T-cell (primary cell): ENCODE measurements at regions of chr1 and their contacts with region 1.

Region 1: DNA sequence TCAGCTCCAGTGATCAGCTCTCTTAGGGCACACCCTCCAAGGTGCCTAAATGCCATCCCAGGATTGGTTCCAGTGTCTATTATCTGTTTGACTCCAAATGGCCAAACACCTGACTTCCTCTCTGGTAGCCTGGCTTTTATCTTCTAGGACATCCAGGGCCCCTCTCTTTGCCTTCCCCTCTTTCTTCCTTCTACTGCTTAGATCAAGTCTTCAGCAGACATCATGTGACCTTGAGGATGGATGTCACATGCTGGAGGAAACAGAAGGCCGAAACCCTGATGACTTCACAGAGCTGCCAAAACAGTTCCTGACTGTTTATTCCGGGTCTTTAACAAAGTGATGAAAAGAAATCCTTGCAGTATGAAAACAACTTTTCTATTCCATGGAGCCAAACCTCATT is 24.4 kb upstream of the WDR26 start:
- DNase-seq: no peak
- ATAC-seq: no peak
- H3K4me3 ChIP-seq: no peak overlapping the region
- H3K4me3 Mint-ChIP-seq: no peak overlapping the region
- H3K27ac ChIP-seq: no peak overlapping the region
- H3K27ac Mint-ChIP-seq: peak overlapping the region in 1 of 2 donors; percentile 59
- H3K4me1 ChIP-seq: peaks cover 0 to 9% of the 10 kb centered on the region in 2 experiments
- H3K4me1 Mint-ChIP-seq: peaks cover 10 to 12% (median 11%) of the 10 kb centered on the region in 3 donors
- H3K27me3 ChIP-seq: no peaks in the 10 kb centered on the region
- H3K27me3 Mint-ChIP-seq: no peaks in the 10 kb centered on the region

Region 2: DNA sequence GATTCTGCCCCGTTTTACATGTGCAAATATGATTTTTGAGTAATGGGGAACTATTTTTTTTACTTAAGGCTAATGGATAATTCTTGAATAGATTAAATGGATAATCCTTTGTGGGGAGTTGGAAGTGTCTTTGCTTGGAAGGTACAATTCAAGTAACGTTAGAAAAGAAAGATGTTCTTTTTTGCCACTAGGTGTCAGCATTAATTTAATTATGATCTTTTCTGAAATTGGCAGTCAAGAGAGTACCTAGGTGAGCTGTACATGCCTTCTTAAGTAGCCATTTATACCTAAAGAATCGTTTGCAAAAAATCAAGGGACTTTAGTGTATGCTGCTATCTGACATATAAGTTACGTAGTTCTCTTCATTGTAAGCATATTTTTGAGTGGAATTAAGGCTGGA is 342.9 kb before region 1 on chr1:
- CTCF ChIA-PET with region 1: interaction called, 24 to 34 read pairs
- POLR2A ChIA-PET with region 1: interaction called in 1 of 2 experiments, 3 read pairs
- DNase-seq: peak in 2 of 35 experiments; percentile 1 to 68
- ATAC-seq: peak; percentile 18 to 26 (median 25)
- H3K4me3 ChIP-seq: no peak overlapping the region
- H3K4me3 Mint-ChIP-seq: peak overlapping the region; percentile 45 to 68 (median 53)
- H3K27ac ChIP-seq: no peak overlapping the region
- H3K27ac Mint-ChIP-seq: peak overlapping the region; percentile 73 to 91
- H3K4me1 ChIP-seq: peaks cover 14 to 17% of the 10 kb centered on the region in 2 experiments
- H3K4me1 Mint-ChIP-seq: peaks cover 40 to 50% (median 41%) of the 10 kb centered on the region in 3 donors
- H3K27me3 ChIP-seq: no peaks in the 10 kb centered on the region
- H3K27me3 Mint-ChIP-seq: peaks cover 2 to 4% of the 10 kb centered on the region in 2 donors

Region 3: DNA sequence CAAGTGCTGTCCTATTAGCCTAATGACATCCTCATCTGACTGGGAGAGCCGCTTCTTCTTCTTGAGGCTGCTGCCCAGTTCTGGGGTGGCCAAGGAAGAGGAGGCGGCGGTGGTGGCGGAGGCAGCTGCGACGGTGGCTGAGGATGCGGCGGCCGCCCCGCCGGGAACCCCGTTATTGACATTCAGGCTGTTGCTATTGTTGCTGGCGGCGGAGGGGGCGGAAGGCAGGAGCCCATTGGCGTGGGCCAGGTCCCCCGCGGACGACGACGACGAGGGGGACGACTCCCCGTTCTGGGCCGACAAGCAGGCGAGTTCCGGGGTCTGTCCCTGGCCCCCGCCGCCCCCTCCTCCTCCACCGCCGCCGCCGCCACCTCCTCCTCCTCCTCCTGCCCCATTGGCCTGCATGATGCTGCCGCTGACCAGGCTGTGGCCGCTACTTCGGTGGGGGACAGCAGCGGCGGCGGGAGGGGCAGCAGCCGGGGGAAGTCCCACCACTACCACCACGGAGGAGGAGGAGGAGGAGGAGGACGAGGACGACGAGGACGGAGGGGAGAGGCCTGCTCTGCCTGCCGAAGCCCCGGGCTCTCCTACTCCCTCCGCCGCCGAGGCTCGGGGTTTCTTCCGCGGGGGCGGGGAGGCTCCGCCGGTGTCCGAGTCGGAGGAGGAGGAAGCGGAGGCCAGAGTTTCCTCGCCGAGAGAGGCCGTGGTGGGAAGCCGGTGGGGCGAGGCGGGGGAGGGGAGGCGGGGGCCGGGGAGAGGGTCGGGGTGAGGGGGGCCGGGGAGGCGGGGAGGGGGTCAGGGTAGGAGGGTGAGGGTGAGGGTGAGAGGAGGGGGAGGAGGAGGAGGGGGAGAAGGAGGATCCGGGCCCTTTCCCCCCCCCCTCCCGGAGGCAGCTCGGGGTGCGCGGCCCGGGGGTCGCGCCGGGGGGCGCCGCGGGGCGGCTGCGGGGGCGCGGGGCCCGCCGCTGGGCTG is 25.0 kb before region 1 on chr1:
- CTCF ChIA-PET with region 1: interaction called, 13 to 14 read pairs
- POLR2A ChIA-PET with region 1: interaction called in 1 of 2 experiments, 5 read pairs
- DNase-seq: peak; percentile 13 to 66 (median 47)
- ATAC-seq: peak; percentile 18 to 38 (median 22)
- H3K4me3 ChIP-seq: peak overlapping the region; percentile 79 to 93
- H3K4me3 Mint-ChIP-seq: peak overlapping the region; percentile 85 to 91 (median 89)
- H3K27ac ChIP-seq: peak overlapping the region; percentile 92
- H3K27ac Mint-ChIP-seq: peak overlapping the region; percentile 86 to 91
- H3K4me1 ChIP-seq: peaks cover 18 to 44% of the 10 kb centered on the region in 2 experiments
- H3K4me1 Mint-ChIP-seq: peaks cover 61 to 67% (median 65%) of the 10 kb centered on the region in 3 donors
- H3K27me3 ChIP-seq: no peaks in the 10 kb centered on the region
- H3K27me3 Mint-ChIP-seq: no peaks in the 10 kb centered on the region

Region 4: DNA sequence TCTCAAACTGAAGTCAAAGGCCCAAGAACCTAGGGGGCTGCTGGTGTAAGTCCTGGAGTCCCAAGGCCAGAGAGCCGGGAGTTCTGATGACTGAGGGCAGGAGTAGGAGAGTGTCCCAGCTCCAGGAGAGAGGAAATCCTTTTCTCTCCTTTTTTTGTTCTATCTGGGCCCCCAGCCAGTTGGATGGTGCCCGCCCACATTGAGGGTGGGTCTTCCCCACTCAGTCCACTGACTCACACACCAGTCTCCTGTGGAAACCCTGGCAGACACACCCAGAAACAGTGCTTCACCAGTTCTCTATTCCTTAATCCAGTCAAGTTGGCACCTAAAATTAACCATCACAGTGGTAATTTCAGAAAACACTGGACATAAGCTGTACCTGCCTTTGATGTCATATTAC is 11.7 kb before region 1 on chr1:
- CTCF ChIA-PET with region 1: interaction called, 5 to 14 read pairs
- POLR2A ChIA-PET with region 1: no interaction called
- DNase-seq: no peak
- ATAC-seq: no peak
- H3K4me3 ChIP-seq: no peak overlapping the region
- H3K4me3 Mint-ChIP-seq: no peak overlapping the region
- H3K27ac ChIP-seq: no peak overlapping the region
- H3K27ac Mint-ChIP-seq: no peak overlapping the region
- H3K4me1 ChIP-seq: no peaks in the 10 kb centered on the region
- H3K4me1 Mint-ChIP-seq: peaks cover 8 to 18% (median 8%) of the 10 kb centered on the region in 3 donors
- H3K27me3 ChIP-seq: no peaks in the 10 kb centered on the region
- H3K27me3 Mint-ChIP-seq: no peaks in the 10 kb centered on the region

Region 5: GRCh38 chr1:224647449-224647848 is 188.5 kb after region 1 on chr1:
- CTCF ChIA-PET with region 1: no interaction called
- POLR2A ChIA-PET with region 1: no interaction called
- DNase-seq: no peak
- ATAC-seq: no peak
- H3K4me3 ChIP-seq: no peak overlapping the region
- H3K4me3 Mint-ChIP-seq: no peak overlapping the region
- H3K27ac ChIP-seq: no peak overlapping the region
- H3K27ac Mint-ChIP-seq: no peak overlapping the region
- H3K4me1 ChIP-seq: no peaks in the 10 kb centered on the region
- H3K4me1 Mint-ChIP-seq: peaks cover 0 to 7% (median 0%) of the 10 kb centered on the region in 3 donors
- H3K27me3 ChIP-seq: peaks cover 0 to 4% of the 10 kb centered on the region in 2 experiments
- H3K27me3 Mint-ChIP-seq: peaks cover 8 to 9% of the 10 kb centered on the region in 2 donors

Region 6: DNA sequence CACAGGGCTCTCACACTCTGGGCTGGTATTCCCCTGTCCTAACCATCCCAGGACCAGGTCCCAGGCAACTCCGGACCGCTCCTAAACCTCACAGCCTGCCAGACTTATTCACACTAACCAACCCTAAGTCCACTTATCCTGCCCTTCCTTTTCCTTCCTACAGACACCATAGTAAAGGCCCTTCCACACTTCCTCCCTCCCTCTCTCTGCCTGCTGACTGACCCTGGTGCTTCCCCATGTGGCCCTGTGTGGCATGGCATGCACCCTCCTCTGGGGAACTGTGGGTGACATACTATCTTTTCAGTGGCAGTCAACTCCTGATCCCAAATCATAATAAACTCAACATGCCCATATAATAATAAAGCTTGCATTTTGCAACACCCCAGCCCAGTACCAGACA is 315.4 kb after region 1 on chr1:
- CTCF ChIA-PET with region 1: interaction called in 1 of 2 experiments, 10 read pairs
- POLR2A ChIA-PET with region 1: no interaction called
- DNase-seq: no peak
- ATAC-seq: no peak
- H3K4me3 ChIP-seq: no peak overlapping the region
- H3K4me3 Mint-ChIP-seq: no peak overlapping the region
- H3K27ac ChIP-seq: no peak overlapping the region
- H3K27ac Mint-ChIP-seq: no peak overlapping the region
- H3K4me1 ChIP-seq: no peaks in the 10 kb centered on the region
- H3K4me1 Mint-ChIP-seq: no peaks in the 10 kb centered on the region
- H3K27me3 ChIP-seq: no peaks in the 10 kb centered on the region
- H3K27me3 Mint-ChIP-seq: peaks cover 5 to 11% of the 10 kb centered on the region in 2 donors